Naive thymus-derived CD4-positive, alpha-beta T cell (primary cell): ENCODE measurements at regions of chr10 and their contacts with region 1.

Region 1: DNA sequence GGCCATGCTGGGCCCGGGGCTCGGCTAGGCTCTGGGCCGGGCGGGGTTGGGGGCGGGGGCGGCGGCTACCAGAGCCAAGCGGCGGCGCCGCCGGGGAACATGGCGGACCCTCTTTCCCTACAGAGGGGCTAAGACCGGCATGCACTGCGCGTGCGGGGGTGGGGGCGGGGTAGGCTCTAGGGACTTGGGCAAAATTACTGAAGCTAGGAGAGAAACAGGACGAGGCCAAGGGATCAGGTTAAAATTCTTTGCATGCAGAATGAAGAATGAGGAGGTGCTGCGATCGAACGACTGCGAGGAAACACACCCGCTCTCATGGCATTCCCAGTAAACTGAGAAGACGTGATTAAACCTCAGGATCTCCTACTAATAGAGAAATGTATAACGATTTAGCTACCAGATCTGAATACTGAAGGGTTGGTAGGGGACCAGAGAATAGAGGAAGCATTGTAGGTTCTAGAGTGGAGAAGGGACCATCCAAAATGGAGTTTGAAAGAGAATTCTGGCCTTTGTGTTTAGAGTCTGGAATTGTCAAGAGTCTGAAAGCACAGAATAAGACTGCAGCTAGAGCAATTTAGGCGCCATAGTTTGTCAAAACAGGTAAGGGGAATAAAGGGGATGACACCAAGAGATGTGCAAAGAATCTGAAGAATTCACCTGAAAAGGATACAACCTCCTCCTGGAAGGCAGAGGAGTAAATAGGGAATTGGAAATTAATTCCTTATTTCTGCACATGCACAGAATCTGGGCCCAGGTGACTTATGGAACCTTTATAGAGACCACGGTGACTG is at the start of gene PPP3CB:
- DNase-seq: peak in 6 of 9 donors; percentile 77 to 93 (median 84)
- ATAC-seq: peak; percentile 89
- H3K4me3 ChIP-seq: peak within 1 kb of the TSS; percentile 99
- H3K4me3 Mint-ChIP-seq: peak within 1 kb of the TSS; percentile 84 to 99 (median 90)
- H3K27ac ChIP-seq: peak within 1 kb of the TSS; percentile 91
- H3K27ac Mint-ChIP-seq: peak within 1 kb of the TSS; percentile 83 to 99 (median 93)
- H3K4me1 ChIP-seq: peaks cover 19 to 38% of the 10 kb centered on the region in 2 donors
- H3K4me1 Mint-ChIP-seq: peaks cover 44 to 63% (median 55%) of the 10 kb centered on the region in 7 donors
- H3K27me3 ChIP-seq: no peaks in the 10 kb centered on the region
- H3K27me3 Mint-ChIP-seq: no peaks in the 10 kb centered on the region
- total RNA-seq, gene PPP3CB: 25.7 to 44.5 (median 41.4) TPM

Region 2: DNA sequence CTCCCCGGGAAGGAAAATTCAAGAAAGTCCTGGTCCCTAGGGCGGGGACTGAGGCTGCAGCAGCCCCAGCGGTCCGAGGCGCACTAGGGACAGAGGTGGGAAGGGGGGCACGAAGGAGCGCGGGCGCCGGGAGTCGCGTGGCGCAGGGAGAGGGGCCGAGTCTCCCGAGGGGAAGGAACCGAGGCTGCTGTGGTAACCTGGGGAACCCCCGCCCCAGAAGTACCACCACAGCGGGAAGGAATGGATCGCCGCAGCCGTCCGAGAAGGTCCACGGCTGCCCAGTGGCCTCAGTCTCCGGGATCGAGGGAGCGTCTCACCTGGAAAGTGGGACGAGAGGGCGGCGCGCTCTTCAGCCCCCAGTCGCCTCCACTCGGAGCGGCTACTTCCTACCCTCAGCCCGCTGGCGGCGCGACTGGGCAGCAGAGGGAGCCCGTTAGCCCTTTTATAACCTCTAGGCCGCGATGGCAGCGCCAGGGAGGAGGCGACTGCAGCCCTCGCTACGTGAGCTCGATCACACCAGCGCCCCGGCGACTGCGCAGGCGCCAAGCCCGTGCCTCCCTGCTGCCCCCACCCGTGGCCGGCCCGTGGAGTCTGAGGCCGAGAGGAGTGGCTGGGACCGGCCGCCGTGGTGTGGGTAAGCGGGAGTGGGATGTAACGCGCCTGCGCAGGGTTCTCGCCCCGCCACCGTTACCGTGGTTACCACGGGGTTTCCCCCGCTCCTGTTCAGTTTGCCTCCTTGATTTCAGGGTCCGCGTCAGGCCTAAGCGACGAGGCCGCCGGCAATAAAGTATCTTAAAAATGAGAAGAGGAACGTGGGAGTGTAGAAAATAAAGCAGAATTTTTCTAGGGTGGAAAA is 399.4 kb before region 1 on chr10 and contains the start of gene P4HA1:
- CTCF ChIA-PET with region 1: no interaction called
- POLR2A ChIA-PET with region 1: no interaction called
- intact Hi-C with region 1: loop called (anchors 1 kb)
- DNase-seq: peak; percentile 88 to 99 (median 92)
- ATAC-seq: peak; percentile 95
- H3K4me3 ChIP-seq: peak within 1 kb of the TSS; percentile 60
- H3K4me3 Mint-ChIP-seq: peak within 1 kb of the TSS; percentile 91 to 97 (median 96)
- H3K27ac ChIP-seq: peak within 1 kb of the TSS; percentile 97
- H3K27ac Mint-ChIP-seq: peak within 1 kb of the TSS; percentile 76 to 98 (median 92)
- H3K4me1 ChIP-seq: peaks cover 0 to 12% of the 10 kb centered on the region in 2 donors
- H3K4me1 Mint-ChIP-seq: peaks cover 13 to 44% (median 38%) of the 10 kb centered on the region in 7 donors
- H3K27me3 ChIP-seq: no peaks in the 10 kb centered on the region
- H3K27me3 Mint-ChIP-seq: peaks cover 0 to 3% (median 0%) of the 10 kb centered on the region in 5 donors
- total RNA-seq, gene P4HA1: 10.5 to 74.7 (median 14.7) TPM

Region 3: DNA sequence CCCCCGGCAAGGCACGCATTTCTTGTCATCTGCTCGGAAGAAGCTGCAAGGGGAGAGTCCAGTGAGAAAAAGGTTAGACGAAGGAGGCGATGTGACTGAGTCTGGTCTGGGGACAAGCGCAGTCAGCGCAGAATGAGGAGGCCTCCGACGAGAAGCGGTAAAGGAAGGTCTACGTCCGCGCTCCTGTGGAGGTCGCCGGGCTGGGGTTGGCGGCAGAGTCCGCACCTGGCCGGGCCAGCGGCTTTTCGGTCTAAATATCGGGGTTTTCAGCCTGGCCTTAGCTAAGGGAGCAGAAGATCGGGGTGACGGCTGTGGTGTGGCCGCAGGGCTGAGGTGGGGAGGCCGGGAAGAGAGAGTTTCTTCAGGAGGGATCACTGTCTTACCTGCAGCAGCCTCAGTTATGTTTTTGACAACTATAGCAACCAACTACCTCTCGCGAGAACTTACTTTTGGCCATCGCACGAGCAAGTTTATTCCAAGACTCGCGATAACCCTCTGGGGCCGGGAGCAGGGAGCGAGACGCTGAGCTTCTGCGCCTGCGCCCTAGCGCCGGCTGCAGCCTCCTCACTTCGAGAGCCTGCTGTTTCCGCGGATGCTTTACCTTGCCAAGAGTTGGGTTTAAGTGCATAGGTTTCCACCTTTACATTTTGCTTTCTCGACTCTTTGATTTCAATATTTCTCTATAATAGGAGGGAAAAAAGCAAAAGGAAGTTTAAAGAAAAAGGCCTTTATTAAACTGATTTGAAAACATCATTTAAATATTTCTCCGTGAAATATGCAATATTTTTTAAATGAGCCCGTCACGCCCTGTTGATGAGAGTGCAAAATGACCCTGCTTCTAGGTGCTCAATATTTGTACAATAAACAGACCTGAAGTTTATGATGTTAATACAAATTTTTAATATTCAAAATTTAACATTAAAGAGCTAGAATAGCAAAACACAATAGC is 137.5 kb before region 1 on chr10 and contains the start of gene CFAP70:
- CTCF ChIA-PET with region 1: no interaction called
- POLR2A ChIA-PET with region 1: interaction called, 8 read pairs
- intact Hi-C with region 1: loop called (anchors 1 kb)
- DNase-seq: peak; percentile 79 to 97 (median 95)
- ATAC-seq: peak; percentile 97
- H3K4me3 ChIP-seq: peak within 1 kb of the TSS; percentile 70
- H3K4me3 Mint-ChIP-seq: peak within 1 kb of the TSS; percentile 91 to 99 (median 94)
- H3K27ac ChIP-seq: peak within 1 kb of the TSS; percentile 85
- H3K27ac Mint-ChIP-seq: peak within 1 kb of the TSS; percentile 92 to 99 (median 97)
- H3K4me1 ChIP-seq: peaks cover 4 to 5% of the 10 kb centered on the region in 2 donors
- H3K4me1 Mint-ChIP-seq: peaks cover 11 to 20% (median 18%) of the 10 kb centered on the region in 7 donors
- H3K27me3 ChIP-seq: no peaks in the 10 kb centered on the region
- H3K27me3 Mint-ChIP-seq: peaks cover 0 to 23% (median 0%) of the 10 kb centered on the region in 5 donors
- total RNA-seq, gene CFAP70: 0.80 to 5.4 (median 4.6) TPM

Region 4: GRCh38 chr10:73625884-73626752 is 130.0 kb after region 1 on chr10:
- CTCF ChIA-PET with region 1: no interaction called
- POLR2A ChIA-PET with region 1: interaction called, 14 read pairs
- intact Hi-C with region 1: loop called (anchors 1 kb)
- DNase-seq: peak; percentile 76 to 97 (median 91)
- ATAC-seq: peak; percentile 97
- H3K4me3 ChIP-seq: peak overlapping the region; percentile 99
- H3K4me3 Mint-ChIP-seq: peak overlapping the region; percentile 91 to 100 (median 96)
- H3K27ac ChIP-seq: peak overlapping the region; percentile 87
- H3K27ac Mint-ChIP-seq: peak overlapping the region; percentile 95 to 100 (median 97)
- H3K4me1 ChIP-seq: peaks cover 7 to 9% of the 10 kb centered on the region in 2 donors
- H3K4me1 Mint-ChIP-seq: peaks cover 0 to 29% (median 24%) of the 10 kb centered on the region in 7 donors
- H3K27me3 ChIP-seq: no peaks in the 10 kb centered on the region
- H3K27me3 Mint-ChIP-seq: no peaks in the 10 kb centered on the region

Region 5: DNA sequence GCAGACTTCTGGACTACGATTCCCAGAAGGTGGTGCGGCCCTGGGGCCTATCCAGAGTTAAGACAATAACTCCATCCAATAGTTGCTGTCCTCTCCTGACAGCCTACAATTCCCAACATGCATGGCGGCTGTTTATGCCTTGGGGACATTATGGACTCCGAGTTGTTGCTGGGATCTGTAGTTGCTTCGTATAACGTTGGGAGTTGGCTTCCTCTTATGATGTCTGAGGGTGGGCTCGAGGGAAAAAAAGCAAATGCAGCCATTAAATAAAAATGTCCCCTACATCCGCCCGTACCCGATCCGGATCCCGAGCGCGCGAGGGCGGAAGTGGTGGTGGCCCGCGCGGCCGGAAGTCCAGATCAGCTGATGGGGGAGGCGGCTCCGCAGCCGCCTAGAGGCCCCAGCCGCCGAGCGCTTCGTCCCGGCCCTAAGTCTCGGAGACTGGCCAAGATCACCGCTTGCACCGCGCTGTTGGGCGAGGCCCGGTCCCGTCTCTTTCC is 289.2 kb after region 1 on chr10 and contains the start of gene ZSWIM8:
- CTCF ChIA-PET with region 1: no interaction called
- POLR2A ChIA-PET with region 1: interaction called, 3 read pairs
- intact Hi-C with region 1: loop called in 1 of 2 experiments (anchors 5 kb)
- DNase-seq: peak; percentile 70 to 93 (median 86)
- ATAC-seq: peak; percentile 91
- H3K4me3 ChIP-seq: peak within 1 kb of the TSS; percentile 91
- H3K4me3 Mint-ChIP-seq: peak within 1 kb of the TSS; percentile 97 to 100 (median 98)
- H3K27ac ChIP-seq: peak within 1 kb of the TSS; percentile 83
- H3K27ac Mint-ChIP-seq: peak within 1 kb of the TSS; percentile 95 to 99 (median 98)
- H3K4me1 ChIP-seq: peaks cover 36 to 43% of the 10 kb centered on the region in 2 donors
- H3K4me1 Mint-ChIP-seq: peaks cover 27 to 66% (median 53%) of the 10 kb centered on the region in 7 donors
- H3K27me3 ChIP-seq: no peaks in the 10 kb centered on the region
- H3K27me3 Mint-ChIP-seq: no peaks in the 10 kb centered on the region
- total RNA-seq, gene ZSWIM8: 70.9 to 102 (median 83.2) TPM

Region 6: GRCh38 chr10:73837072-73837471 is 341.0 kb after region 1 on chr10:
- CTCF ChIA-PET with region 1: no interaction called
- POLR2A ChIA-PET with region 1: no interaction called
- intact Hi-C with region 1: no loop called
- DNase-seq: no peak
- ATAC-seq: no peak
- H3K4me3 ChIP-seq: no peak overlapping the region
- H3K4me3 Mint-ChIP-seq: no peak overlapping the region
- H3K27ac ChIP-seq: no peak overlapping the region
- H3K27ac Mint-ChIP-seq: peak overlapping the region in 1 of 9 donors; percentile 24
- H3K4me1 ChIP-seq: no peaks in the 10 kb centered on the region
- H3K4me1 Mint-ChIP-seq: peaks cover 0 to 6% (median 0%) of the 10 kb centered on the region in 7 donors
- H3K27me3 ChIP-seq: no peaks in the 10 kb centered on the region
- H3K27me3 Mint-ChIP-seq: no peaks in the 10 kb centered on the region

Region 7: GRCh38 chr10:74826142-74827044 is 1330.3 kb after region 1 on chr10 and contains the start of gene KAT6B:
- CTCF ChIA-PET with region 1: no interaction called
- POLR2A ChIA-PET with region 1: no interaction called
- intact Hi-C with region 1: loop called in 1 of 2 experiments (anchors 10 kb)
- DNase-seq: peak; percentile 93 to 100 (median 100)
- ATAC-seq: peak; percentile 86
- H3K4me3 ChIP-seq: peak within 1 kb of the TSS; percentile 86
- H3K4me3 Mint-ChIP-seq: peak within 1 kb of the TSS; percentile 90 to 98 (median 92)
- H3K27ac ChIP-seq: peak within 1 kb of the TSS; percentile 98
- H3K27ac Mint-ChIP-seq: peak within 1 kb of the TSS; percentile 92 to 99 (median 98)
- H3K4me1 ChIP-seq: peaks cover 22 to 50% of the 10 kb centered on the region in 2 donors
- H3K4me1 Mint-ChIP-seq: peaks cover 44 to 74% (median 69%) of the 10 kb centered on the region in 7 donors
- H3K27me3 ChIP-seq: no peaks in the 10 kb centered on the region
- H3K27me3 Mint-ChIP-seq: no peaks in the 10 kb centered on the region
- total RNA-seq, gene KAT6B: 33.2 to 80.5 (median 68.5) TPM